CD4-positive, alpha-beta T cell (primary cell): ENCODE measurements at regions of chr3 and their contacts with region 1.

Region 1: GRCh38 chr3:152258448-152259393 is 10.0 kb upstream of the MBNL1 start:
- DNase-seq: peak in 12 of 14 experiments; percentile 35 to 90 (median 58)
- ATAC-seq: peak; percentile 65
- H3K4me3 ChIP-seq: peak overlapping the region; percentile 19
- H3K4me3 Mint-ChIP-seq: peak overlapping the region; percentile 86
- H3K27ac ChIP-seq: peak overlapping the region; percentile 81 to 86
- H3K27ac Mint-ChIP-seq: peak overlapping the region; percentile 96
- H3K4me1 ChIP-seq: peaks cover 57% of the 10 kb centered on the region
- H3K4me1 Mint-ChIP-seq: peaks cover 96% of the 10 kb centered on the region
- H3K27me3 ChIP-seq: no peaks in the 10 kb centered on the region
- H3K27me3 Mint-ChIP-seq: no peaks in the 10 kb centered on the region
- CTCF ChIP-seq: no peak

Region 2: GRCh38 chr3:152199102-152199840 is 59.5 kb before region 1 on chr3:
- CTCF ChIA-PET with region 1: interaction called, 5 read pairs
- POLR2A ChIA-PET with region 1: interaction called, 24 read pairs
- intact Hi-C with region 1: loop called in 1 of 2 experiments (anchors 5 kb)
- DNase-seq: peak in 3 of 14 experiments; percentile 54 to 67 (median 64)
- ATAC-seq: peak; percentile 38
- H3K4me3 ChIP-seq: peak overlapping the region; percentile 43
- H3K4me3 Mint-ChIP-seq: peak overlapping the region; percentile 80
- H3K27ac ChIP-seq: peak overlapping the region; percentile 62 to 81
- H3K27ac Mint-ChIP-seq: peak overlapping the region; percentile 96
- H3K4me1 ChIP-seq: peaks cover 25% of the 10 kb centered on the region
- H3K4me1 Mint-ChIP-seq: peaks cover 86% of the 10 kb centered on the region
- H3K27me3 ChIP-seq: no peaks in the 10 kb centered on the region
- H3K27me3 Mint-ChIP-seq: no peaks in the 10 kb centered on the region
- CTCF ChIP-seq: no peak